Activated T-helper 2 cell treated with anti-CD3 and anti-CD28 coated beads, Interferon-gamma antibody, Interleukin-2, Interleukin-4, amounts not matched to agents 10 μg/mL and 5 μg/mL and 100 μg/mL, durations not matched to agents 14 hours and 24 hours and 36 hours (primary cell): ENCODE measurements at regions of chr17 and their contacts with region 1.

Region 1: DNA sequence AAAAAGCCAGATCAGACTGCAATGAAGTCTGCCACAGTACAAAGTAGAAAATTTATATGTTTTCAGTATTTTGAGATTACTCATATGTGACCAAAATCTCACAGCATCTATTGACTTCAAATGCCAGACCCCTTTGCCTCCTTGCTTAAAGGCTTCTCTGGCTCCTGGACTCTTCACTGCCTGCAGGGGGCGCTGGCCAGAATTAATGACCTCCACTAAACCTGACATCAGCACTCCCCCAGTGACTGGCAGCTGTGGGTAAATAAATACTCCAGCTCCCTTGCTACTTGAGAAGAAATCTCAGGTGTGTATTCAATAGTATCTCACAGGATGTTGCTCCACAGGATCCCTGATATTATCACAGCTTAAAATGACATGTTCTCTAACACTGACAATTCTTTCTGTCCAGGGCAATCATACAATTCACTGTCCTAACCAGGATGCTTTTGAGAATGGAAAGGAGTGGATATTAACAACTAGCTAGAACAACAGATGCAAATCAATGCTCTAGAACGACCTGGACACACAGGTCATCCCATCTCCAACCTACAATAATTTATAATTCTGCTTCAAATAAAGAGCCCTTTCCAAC is 4.0 kb downstream of the BECN1 start:
- DNase-seq: peak; percentile 47
- H3K4me3 Mint-ChIP-seq: no peak overlapping the region
- H3K27ac Mint-ChIP-seq: no peak overlapping the region
- H3K4me1 Mint-ChIP-seq: peaks cover 14% of the 10 kb centered on the region
- H3K27me3 Mint-ChIP-seq: no peaks in the 10 kb centered on the region

Region 2: DNA sequence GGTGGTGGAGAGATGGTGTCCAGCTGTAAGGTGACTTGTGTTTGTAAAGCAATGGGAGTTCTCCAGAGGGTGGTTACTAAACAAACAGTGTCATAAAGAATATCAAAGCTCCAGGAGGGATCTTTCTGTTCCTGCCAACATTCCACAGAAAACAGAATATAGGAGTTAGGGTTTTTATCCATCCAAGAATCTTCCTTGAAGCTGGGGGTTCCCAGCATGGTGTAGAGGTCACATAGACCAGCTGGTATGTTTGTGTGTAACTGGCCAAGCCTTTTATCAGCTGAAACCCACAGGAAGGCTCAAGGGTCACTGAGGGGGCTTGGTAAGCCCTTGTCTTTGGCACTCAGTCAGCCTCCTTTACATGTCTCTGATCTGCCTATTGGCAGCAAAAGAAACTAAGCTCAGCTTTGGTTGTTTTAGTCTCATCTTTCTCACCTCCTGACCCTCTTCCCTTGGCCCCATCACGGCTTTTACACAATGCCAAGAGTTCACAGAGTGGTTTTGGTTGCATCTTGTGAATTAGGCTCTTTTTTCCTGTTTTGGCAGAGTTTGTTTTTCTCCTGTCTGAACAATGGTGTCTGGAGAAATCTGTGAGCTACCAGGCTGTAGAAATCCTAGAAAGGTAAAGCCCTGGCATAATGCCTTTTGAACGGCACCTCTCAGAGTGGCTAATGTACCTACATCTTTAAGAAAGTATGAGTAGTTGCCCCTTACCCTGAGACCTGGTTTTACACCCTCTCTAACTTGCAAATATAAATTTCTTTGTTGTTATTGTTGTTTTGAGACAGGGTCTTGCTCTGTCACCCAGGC is 16.8 kb before region 1 on chr17:
- intact Hi-C with region 1: loop called (anchors 2 kb)
- DNase-seq: no peak
- H3K4me3 Mint-ChIP-seq: no peak overlapping the region
- H3K27ac Mint-ChIP-seq: no peak overlapping the region
- H3K4me1 Mint-ChIP-seq: peaks cover 5% of the 10 kb centered on the region
- H3K27me3 Mint-ChIP-seq: peaks cover 15% of the 10 kb centered on the region

Region 3: GRCh38 chr17:42832974-42833766 is 13.1 kb after region 1 on chr17 and contains the start of gene PSME3:
- intact Hi-C with region 1: loop called (anchors 1 kb)
- DNase-seq: peak; percentile 90
- H3K4me3 Mint-ChIP-seq: peak within 1 kb of the TSS; percentile 92
- H3K27ac Mint-ChIP-seq: peak within 1 kb of the TSS; percentile 98
- H3K4me1 Mint-ChIP-seq: peaks cover 24% of the 10 kb centered on the region
- H3K27me3 Mint-ChIP-seq: peaks cover 2% of the 10 kb centered on the region
- total RNA-seq, gene PSME3: 172 TPM in 2 replicates

Region 4: DNA sequence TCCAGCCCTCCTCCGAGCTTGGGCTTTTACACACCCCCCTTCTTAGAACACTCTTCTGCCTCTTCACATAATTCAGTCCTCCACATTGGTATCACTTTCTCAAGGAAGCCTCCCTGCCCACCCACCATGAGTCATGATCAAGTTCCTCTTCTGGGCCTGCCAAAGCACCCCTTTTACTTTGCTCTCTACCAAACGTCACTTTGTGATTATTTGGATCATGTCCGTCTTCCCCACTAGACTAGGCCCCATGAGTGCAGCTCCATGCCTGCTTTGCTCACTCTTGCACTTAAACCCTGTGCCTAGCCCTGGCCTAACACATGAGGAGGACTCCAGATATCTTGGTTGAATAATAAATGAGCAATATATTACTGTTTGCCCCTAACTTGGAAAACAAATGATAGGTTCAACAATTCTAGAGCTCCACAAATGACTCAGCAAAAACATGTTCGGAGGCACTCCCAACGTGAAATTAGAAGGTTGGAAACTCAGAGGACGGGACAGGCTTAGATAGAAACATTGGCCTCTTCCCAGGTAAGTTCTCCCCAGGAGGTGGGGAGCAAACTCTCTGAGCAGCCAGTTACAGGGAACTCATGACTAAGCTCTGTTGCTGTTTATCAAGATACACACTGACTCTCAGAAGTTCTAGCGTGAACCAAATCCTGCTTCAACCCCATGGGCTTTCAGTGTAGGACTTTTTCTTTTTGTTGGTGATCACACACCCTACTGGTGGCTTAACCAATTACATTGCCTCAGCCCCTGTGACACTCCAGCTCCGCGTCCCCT is 108.9 kb after region 1 on chr17:
- intact Hi-C with region 1: loop called (anchors 1 kb)
- DNase-seq: peak; percentile 26
- H3K4me3 Mint-ChIP-seq: no peak overlapping the region
- H3K27ac Mint-ChIP-seq: peak overlapping the region; percentile 82
- H3K4me1 Mint-ChIP-seq: peaks cover 13% of the 10 kb centered on the region
- H3K27me3 Mint-ChIP-seq: no peaks in the 10 kb centered on the region